CD14-positive monocyte (primary cell): ENCODE measurements at regions of chr18 and their contacts with region 1.

Region 1: GRCh38 chr18:21053127-21053526 is 58.5 kb downstream of the ROCK1 start:
- DNase-seq: no peak
- H3K4me3 ChIP-seq: no peak overlapping the region
- H3K4me3 Mint-ChIP-seq: no peak overlapping the region
- H3K27ac ChIP-seq: peak overlapping the region in 1 of 2 donors; percentile 49
- H3K27ac Mint-ChIP-seq: no peak overlapping the region
- H3K4me1 ChIP-seq: peaks cover 0 to 4% of the 10 kb centered on the region in 2 donors
- H3K4me1 Mint-ChIP-seq: peaks cover 6% of the 10 kb centered on the region
- H3K27me3 ChIP-seq: no peaks in the 10 kb centered on the region
- H3K27me3 Mint-ChIP-seq: no peaks in the 10 kb centered on the region
- CTCF ChIP-seq: no peak

Region 2: GRCh38 chr18:20996418-20996817 is 56.7 kb before region 1 on chr18:
- intact Hi-C with region 1: loop called in 1 of 2 experiments (anchors 10 kb)
- DNase-seq: no peak
- H3K4me3 ChIP-seq: no peak overlapping the region
- H3K4me3 Mint-ChIP-seq: no peak overlapping the region
- H3K27ac ChIP-seq: peak overlapping the region in 1 of 2 donors; percentile 3
- H3K27ac Mint-ChIP-seq: peak overlapping the region in 2 of 7 donors; percentile 2 to 6
- H3K4me1 ChIP-seq: no peaks in the 10 kb centered on the region
- H3K4me1 Mint-ChIP-seq: peaks cover 8% of the 10 kb centered on the region
- H3K27me3 ChIP-seq: no peaks in the 10 kb centered on the region
- H3K27me3 Mint-ChIP-seq: no peaks in the 10 kb centered on the region
- CTCF ChIP-seq: no peak

Region 3: GRCh38 chr18:21111341-21112139 is 58.4 kb after region 1 on chr18 and contains the start of gene ROCK1:
- intact Hi-C with region 1: no loop called
- DNase-seq: peak; percentile 91 to 96 (median 94)
- H3K4me3 ChIP-seq: peak within 1 kb of the TSS; percentile 80 to 99 (median 92)
- H3K4me3 Mint-ChIP-seq: peak within 1 kb of the TSS; percentile 95 to 97
- H3K27ac ChIP-seq: peak within 1 kb of the TSS; percentile 93 to 96
- H3K27ac Mint-ChIP-seq: peak within 1 kb of the TSS; percentile 96 to 99 (median 98)
- H3K4me1 ChIP-seq: peaks cover 37 to 52% of the 10 kb centered on the region in 2 donors
- H3K4me1 Mint-ChIP-seq: peaks cover 12% of the 10 kb centered on the region
- H3K27me3 ChIP-seq: no peaks in the 10 kb centered on the region
- H3K27me3 Mint-ChIP-seq: no peaks in the 10 kb centered on the region
- CTCF ChIP-seq: no peak
- polyA plus RNA-seq, gene ROCK1: 10.2 to 35.3 (median 20.3) TPM

Region 4: GRCh38 chr18:21179590-21180220 is 126.6 kb after region 1 on chr18:
- intact Hi-C with region 1: loop called in 1 of 2 experiments (anchors 10 kb)
- DNase-seq: peak; percentile 56 to 82 (median 74)
- H3K4me3 ChIP-seq: no peak overlapping the region
- H3K4me3 Mint-ChIP-seq: no peak overlapping the region
- H3K27ac ChIP-seq: no peak overlapping the region
- H3K27ac Mint-ChIP-seq: peak overlapping the region in 1 of 7 donors; percentile 70
- H3K4me1 ChIP-seq: peaks cover 9 to 12% of the 10 kb centered on the region in 2 donors
- H3K4me1 Mint-ChIP-seq: peaks cover 19% of the 10 kb centered on the region
- H3K27me3 ChIP-seq: no peaks in the 10 kb centered on the region
- H3K27me3 Mint-ChIP-seq: peaks cover 1 to 3% (median 2%) of the 10 kb centered on the region in 3 donors
- CTCF ChIP-seq: peak; percentile 70